Naive thymus-derived CD8-positive, alpha-beta T cell (primary cell): ENCODE measurements at regions of chr1 and their contacts with region 1.

Region 1: GRCh38 chr1:22052115-22053016 is at the start of gene CDC42:
- DNase-seq: peak; percentile 95 to 99 (median 98)
- ATAC-seq: peak; percentile 81 to 92
- H3K4me3 Mint-ChIP-seq: peak within 1 kb of the TSS; percentile 92 to 100 (median 96)
- H3K27ac Mint-ChIP-seq: peak within 1 kb of the TSS; percentile 96 to 100 (median 99)
- H3K4me1 Mint-ChIP-seq: peaks cover 29 to 75% (median 62%) of the 10 kb centered on the region in 4 donors
- H3K27me3 Mint-ChIP-seq: peaks cover 0 to 5% (median 0%) of the 10 kb centered on the region in 5 donors
- polyA plus RNA-seq, gene CDC42: 236 to 472 (median 393) TPM

Region 2: GRCh38 chr1:21916447-21917238 is 135.7 kb before region 1 on chr1:
- POLR2A ChIA-PET with region 1: no interaction called
- DNase-seq: no peak
- ATAC-seq: no peak
- H3K4me3 Mint-ChIP-seq: no peak overlapping the region
- H3K27ac Mint-ChIP-seq: no peak overlapping the region
- H3K4me1 Mint-ChIP-seq: peaks cover 2 to 9% (median 8%) of the 10 kb centered on the region in 4 donors
- H3K27me3 Mint-ChIP-seq: no peaks in the 10 kb centered on the region

Region 3: DNA sequence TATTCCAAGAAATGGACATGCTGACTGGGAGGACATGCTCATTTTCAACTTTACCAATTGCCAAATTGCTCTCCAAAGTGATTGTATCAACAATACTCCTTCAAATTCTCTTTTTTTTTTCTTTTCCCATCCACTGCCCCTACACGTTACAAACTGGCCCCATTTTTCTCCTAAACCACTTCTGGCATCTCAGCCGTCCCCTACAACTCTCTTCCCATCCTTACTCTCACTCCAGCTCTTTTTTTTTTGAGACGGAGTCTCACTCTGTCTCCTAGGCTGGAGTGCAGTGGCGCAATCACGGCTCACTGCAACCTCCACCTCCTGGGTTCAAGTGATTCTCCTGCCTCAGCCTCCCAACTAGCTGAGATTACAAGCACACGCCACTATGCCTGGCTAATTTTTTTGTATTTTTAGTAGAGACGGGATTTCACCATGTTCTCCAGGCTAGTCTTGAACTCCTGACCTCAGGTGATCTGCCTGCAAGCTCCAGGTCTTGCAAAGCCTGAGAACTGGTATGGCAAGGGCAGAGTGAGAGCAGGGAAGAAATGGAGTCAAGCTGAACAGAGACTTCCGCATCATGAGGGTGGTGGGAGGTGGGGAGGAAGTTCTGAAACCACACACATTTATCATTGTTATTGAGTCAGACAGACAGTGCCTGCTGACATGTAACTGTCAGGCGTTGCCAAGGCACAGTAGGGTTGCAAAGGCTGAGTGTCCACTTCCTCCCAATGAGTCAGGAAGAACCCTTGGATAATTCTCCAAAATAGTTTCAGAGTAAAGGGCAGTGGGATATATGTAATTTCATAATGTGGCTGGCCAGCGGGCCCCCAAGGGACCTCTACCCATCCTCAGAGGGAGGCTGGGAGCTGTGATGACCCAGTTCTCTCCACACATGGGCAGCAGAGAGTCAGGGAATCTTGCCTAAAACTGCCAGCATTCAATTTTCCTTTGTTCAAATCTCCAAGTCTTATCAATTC is 33.5 kb before region 1 on chr1:
- POLR2A ChIA-PET with region 1: interaction called, 381 read pairs
- DNase-seq: peak in 9 of 10 donors; percentile 38 to 84 (median 63)
- ATAC-seq: peak; percentile 94 to 96
- H3K4me3 Mint-ChIP-seq: peak overlapping the region; percentile 12 to 76 (median 62)
- H3K27ac Mint-ChIP-seq: peak overlapping the region; percentile 88 to 98 (median 94)
- H3K4me1 Mint-ChIP-seq: peaks cover 13 to 39% (median 33%) of the 10 kb centered on the region in 4 donors
- H3K27me3 Mint-ChIP-seq: no peaks in the 10 kb centered on the region

Region 4: GRCh38 chr1:22039594-22040285 is 12.6 kb before region 1 on chr1:
- POLR2A ChIA-PET with region 1: interaction called, 297 read pairs
- DNase-seq: peak; percentile 72 to 98 (median 93)
- ATAC-seq: peak; percentile 91 to 93
- H3K4me3 Mint-ChIP-seq: peak overlapping the region; percentile 68 to 86 (median 78)
- H3K27ac Mint-ChIP-seq: peak overlapping the region; percentile 92 to 100 (median 99)
- H3K4me1 Mint-ChIP-seq: peaks cover 25 to 69% (median 61%) of the 10 kb centered on the region in 4 donors
- H3K27me3 Mint-ChIP-seq: no peaks in the 10 kb centered on the region

Region 5: GRCh38 chr1:22064751-22065402 is 12.5 kb after region 1 on chr1:
- POLR2A ChIA-PET with region 1: interaction called, 23 read pairs
- DNase-seq: no peak
- ATAC-seq: no peak
- H3K4me3 Mint-ChIP-seq: peak overlapping the region; percentile 53 to 83 (median 70)
- H3K27ac Mint-ChIP-seq: peak overlapping the region; percentile 61 to 90 (median 80)
- H3K4me1 Mint-ChIP-seq: peaks cover 53 to 95% (median 92%) of the 10 kb centered on the region in 4 donors
- H3K27me3 Mint-ChIP-seq: no peaks in the 10 kb centered on the region

Region 6: DNA sequence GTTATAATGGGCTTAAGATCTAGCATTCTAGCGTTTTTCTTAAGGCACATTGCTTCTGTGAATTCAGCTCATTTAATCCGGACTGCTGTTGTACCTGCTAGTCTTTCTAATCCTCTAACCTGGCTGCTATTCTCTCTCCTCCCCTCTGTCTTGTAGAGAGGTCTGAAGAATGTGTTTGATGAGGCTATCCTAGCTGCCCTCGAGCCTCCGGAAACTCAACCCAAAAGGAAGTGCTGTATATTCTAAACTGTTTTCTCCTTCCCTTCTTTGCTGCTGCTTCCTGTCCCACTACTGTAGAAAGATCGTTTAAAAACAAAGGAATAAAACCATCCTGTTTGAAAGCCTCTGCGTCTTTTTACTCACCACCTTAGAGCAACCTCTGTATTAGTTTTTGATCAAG is 37.4 kb after region 1 on chr1:
- POLR2A ChIA-PET with region 1: interaction called, 10 read pairs
- DNase-seq: peak in 3 of 10 donors; percentile 24 to 28 (median 25)
- ATAC-seq: peak; percentile 54 to 56
- H3K4me3 Mint-ChIP-seq: peak overlapping the region; percentile 62 to 82 (median 74)
- H3K27ac Mint-ChIP-seq: peak overlapping the region; percentile 56 to 91 (median 84)
- H3K4me1 Mint-ChIP-seq: peaks cover 46 to 93% (median 90%) of the 10 kb centered on the region in 4 donors
- H3K27me3 Mint-ChIP-seq: no peaks in the 10 kb centered on the region

Region 7: DNA sequence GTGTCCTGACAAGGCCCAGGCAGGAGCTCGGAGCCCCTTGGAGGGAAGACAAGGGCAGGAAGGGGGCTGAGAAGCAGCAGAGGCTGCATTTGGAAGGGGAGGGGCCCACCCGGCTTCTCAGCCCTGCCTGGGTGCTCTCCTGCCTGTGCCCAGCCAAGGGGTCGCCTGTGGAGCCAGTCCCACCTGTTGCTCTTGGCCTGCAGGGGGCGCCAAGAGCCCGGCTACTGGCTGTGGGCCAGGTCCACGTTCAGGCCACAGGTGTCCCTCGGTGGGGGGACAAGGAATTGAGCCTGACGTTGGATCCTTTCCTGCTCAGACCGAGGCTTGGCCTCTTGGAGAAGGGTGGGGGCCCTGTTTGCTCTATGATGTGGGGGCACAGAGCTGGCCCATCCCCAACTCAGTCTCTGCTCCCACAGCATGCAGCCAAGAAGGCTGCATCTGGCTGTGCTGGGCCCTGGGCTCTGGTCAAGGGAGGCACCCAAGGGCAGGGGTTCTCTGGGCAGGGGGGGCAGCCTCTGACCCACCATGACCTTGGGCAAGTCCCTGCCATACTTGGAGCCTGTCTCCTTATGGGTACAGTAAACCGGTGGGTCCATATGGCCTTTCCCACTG is 79.6 kb after region 1 on chr1:
- POLR2A ChIA-PET with region 1: no interaction called
- DNase-seq: peak; percentile 13 to 70 (median 50)
- ATAC-seq: peak; percentile 57 to 72
- H3K4me3 Mint-ChIP-seq: no peak overlapping the region
- H3K27ac Mint-ChIP-seq: no peak overlapping the region
- H3K4me1 Mint-ChIP-seq: peaks cover 0 to 12% (median 2%) of the 10 kb centered on the region in 4 donors
- H3K27me3 Mint-ChIP-seq: peaks cover 0 to 14% (median 0%) of the 10 kb centered on the region in 5 donors